ENCODE measurements at regions of chr10 and their contacts with region 1.

Region 1: GRCh38 chr10:94320285-94320914 is 42.3 kb downstream of the NOC3L start:
- DNase-seq: peak; percentile 61
- ATAC-seq: peak; percentile 79

Region 2: DNA sequence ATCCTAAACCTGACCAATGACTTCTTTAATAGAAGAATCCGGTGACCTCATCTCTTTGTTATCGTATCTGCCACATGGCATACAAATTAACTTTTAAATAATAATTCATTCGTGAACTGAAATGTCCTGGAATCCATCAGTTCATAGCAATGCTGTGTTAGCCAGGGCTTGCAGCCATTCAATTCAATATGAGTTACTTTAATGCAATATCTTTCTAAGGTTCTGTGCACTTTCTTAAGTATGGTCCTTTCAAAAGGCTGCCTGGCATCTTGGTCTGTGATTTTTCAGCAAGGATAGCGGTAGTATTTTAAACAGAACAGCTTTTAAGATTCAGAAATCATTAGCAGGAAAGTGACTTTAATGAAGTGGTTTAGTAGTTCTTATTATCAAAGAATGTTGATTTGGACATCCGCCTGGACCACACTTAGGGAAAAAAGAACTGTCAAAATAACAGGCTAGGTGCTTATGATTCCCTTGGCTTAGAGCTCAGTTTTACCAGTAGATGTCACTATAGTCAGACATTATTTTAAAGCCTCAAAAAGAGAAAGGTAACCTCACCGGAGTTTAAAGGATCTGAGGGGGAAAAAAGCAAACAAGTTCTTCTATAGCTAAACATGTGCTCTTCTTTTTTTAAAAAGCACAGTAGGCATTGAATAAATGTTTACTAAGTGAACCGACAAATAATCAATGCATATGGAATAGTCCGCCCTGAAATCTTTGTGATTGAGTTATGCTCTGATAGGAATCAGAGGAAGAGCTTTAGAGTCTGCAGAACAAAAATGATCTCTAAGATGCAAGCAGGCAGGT is 403.9 kb before region 1 on chr10:
- intact Hi-C with region 1: loop called (anchors 2 kb)
- DNase-seq: no peak
- ATAC-seq: peak; percentile 73

Region 3: GRCh38 chr10:94076321-94076841 is 244.0 kb before region 1 on chr10:
- intact Hi-C with region 1: loop called (anchors 2 kb)
- DNase-seq: no peak
- ATAC-seq: peak; percentile 88

Region 4: DNA sequence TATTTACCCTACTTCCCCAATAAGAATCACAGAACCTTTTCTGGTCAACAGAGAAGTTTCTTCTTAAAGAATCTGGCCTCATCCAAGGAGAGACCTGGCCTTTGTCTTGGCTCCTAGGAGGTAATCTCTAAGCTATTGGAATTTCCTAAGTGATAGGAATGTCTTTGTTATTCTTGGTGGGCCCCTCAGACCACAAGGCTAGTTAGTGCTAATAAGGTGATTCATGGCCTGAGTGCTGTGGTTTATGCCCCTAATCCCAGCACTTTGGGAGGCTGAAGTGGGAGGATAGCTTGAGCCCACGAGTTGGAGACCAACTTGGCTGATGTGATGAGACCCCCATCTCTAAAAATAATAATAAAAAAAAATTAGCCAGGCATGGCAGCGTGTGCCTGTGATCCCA is 303.2 kb after region 1 on chr10:
- intact Hi-C with region 1: no loop called
- DNase-seq: no peak
- ATAC-seq: no peak

Measured in Right ventricle myocardium superior (tissue), 1 donor.